ENCODE measurements at regions of chr12 and their contacts with region 1.

Region 1: GRCh38 chr12:79373896-79374499 is 316.8 kb downstream of the PAWR start:
- DNase-seq: no peak
- ATAC-seq: no peak
- H3K4me3 ChIP-seq: no peak overlapping the region
- H3K27ac ChIP-seq: no peak overlapping the region
- H3K4me1 ChIP-seq: no peaks in the 10 kb centered on the region
- H3K27me3 ChIP-seq: no peaks in the 10 kb centered on the region
- CTCF ChIP-seq: peak; percentile 24 to 76 (median 63)

Region 2: GRCh38 chr12:78146365-78146772 is 1227.6 kb before region 1 on chr12:
- intact Hi-C with region 1: loop called in 1 of 10 experiments (anchors 10 kb)
- DNase-seq: no peak
- ATAC-seq: no peak
- H3K4me3 ChIP-seq: no peak overlapping the region
- H3K27ac ChIP-seq: no peak overlapping the region
- H3K4me1 ChIP-seq: peaks cover 0 to 20% (median 0%) of the 10 kb centered on the region in 9 donors
- H3K27me3 ChIP-seq: no peaks in the 10 kb centered on the region
- CTCF ChIP-seq: peak; percentile 48 to 86 (median 77)

Region 3: DNA sequence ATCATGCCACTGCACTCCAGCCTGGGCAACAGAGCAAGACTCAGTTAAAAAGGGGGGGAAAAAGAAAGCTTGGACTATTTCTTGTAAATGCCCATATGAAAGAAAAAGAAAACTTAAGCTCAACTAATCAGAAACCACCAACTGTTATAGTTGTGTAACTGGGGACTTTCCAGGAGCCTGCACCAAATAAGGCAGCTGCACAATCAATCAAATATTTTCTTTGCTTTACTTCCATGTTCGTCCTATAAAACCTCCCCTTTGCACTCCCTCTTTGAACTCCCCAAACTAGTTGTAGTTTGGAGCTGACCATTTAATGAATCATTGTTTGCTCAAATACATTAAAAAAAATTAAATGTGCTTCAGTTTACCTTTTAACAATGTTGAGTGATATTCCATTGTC is 780.3 kb after region 1 on chr12:
- intact Hi-C with region 1: no loop called
- DNase-seq: no peak
- ATAC-seq: no peak
- H3K4me3 ChIP-seq: no peak overlapping the region
- H3K27ac ChIP-seq: no peak overlapping the region
- H3K4me1 ChIP-seq: no peaks in the 10 kb centered on the region
- H3K27me3 ChIP-seq: no peaks in the 10 kb centered on the region
- CTCF ChIP-seq: no peak